Calu3 (cell line): ENCODE measurements at regions of chr3 and their contacts with region 1.

Region 1: DNA sequence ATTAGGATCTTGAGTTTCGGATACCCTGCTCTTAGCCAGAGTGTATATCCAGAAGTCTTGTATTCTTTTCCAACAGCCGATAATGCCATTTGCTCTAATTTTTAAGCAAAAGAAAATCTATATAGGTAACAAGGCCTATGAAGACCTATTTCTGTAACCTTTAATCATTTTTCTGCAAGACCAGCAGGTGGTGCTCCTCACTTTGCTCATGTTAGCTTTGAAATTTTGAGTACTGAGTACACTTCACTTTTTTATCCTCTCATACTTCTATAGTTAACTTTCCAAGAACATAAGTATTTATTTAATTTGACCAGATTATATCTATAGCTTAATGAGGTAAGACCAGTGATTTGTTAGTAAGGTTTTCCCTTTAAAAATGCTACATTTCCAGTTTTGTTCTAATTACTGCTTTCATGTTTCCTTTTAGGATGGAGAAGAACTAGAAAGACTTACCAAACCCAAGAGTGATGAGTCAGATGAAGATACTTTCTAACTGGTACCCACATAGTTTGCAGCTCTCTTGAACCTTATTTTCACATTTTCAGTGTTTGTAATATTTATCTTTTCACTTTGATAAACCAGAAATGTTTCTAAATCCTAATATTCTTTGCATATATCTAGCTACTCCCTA is 20.5 kb downstream of the SLC35A5 start:
- DNase-seq: peak; percentile 40
- H3K4me3 Mint-ChIP-seq: no peak overlapping the region
- H3K27ac Mint-ChIP-seq: no peak overlapping the region
- H3K4me1 Mint-ChIP-seq: no peaks in the 10 kb centered on the region
- H3K27me3 Mint-ChIP-seq: no peaks in the 10 kb centered on the region
- CTCF ChIP-seq: peak; percentile 20

Region 2: DNA sequence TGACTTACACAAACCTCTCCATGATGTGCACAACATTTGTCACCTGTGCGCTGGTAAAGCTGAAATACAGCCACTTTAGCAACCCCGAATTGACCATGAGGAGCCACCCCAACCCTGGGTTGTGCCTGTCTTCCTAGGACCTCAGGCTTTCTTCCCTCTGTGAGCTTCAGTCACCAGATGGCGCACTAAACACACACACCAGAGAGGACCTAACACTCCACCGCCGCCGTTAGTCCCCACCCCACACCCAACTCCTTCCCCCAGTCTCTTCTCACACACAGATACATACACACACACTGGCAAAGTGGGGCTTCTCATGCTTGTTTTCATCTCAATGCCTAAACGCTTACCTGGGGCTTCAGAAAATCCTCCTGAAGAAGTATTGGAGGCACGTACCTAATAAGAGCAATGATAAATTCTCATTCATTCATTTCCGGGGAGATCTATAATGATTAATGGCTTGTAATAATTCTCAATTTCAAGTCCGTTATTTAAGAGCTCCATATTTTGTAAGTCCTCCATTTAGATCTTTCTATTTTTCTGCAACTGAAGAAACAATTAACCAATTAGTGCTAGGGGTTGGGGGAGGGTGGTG is 60.6 kb after region 1 on chr3:
- CTCF ChIA-PET with region 1: interaction called, 3 read pairs
- intact Hi-C with region 1: loop called (anchors 2 kb)
- DNase-seq: peak; percentile 82
- H3K4me3 Mint-ChIP-seq: peak overlapping the region; percentile 31
- H3K27ac Mint-ChIP-seq: no peak overlapping the region
- H3K4me1 Mint-ChIP-seq: peaks cover 37% of the 10 kb centered on the region
- H3K27me3 Mint-ChIP-seq: no peaks in the 10 kb centered on the region
- CTCF ChIP-seq: no peak

Region 3: DNA sequence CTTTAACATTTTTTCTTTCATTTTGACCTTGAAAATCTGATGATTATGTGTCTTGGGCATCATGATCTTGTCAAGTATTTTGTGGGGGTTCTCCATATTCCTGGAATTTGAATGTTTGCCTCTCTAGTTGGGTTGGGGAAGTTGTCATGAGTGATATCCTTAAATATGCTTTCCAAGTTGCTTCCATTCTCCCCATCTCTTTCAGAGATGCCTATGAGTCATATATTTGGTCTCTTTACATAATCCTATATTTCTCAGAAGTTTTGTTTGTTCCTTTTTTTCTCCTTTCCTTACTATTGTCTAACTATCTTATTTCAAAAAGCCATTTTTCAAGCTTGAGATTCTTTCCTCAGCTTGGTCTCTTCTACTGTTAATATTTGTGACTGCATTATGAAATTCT is 127.6 kb after region 1 on chr3:
- CTCF ChIA-PET with region 1: no interaction called
- intact Hi-C with region 1: loop called (anchors 10 kb)
- DNase-seq: no peak
- H3K4me3 Mint-ChIP-seq: no peak overlapping the region
- H3K27ac Mint-ChIP-seq: no peak overlapping the region
- H3K4me1 Mint-ChIP-seq: no peaks in the 10 kb centered on the region
- H3K27me3 Mint-ChIP-seq: peaks cover 2% of the 10 kb centered on the region
- CTCF ChIP-seq: no peak

Region 4: GRCh38 chr3:112814266-112814665 is 231.9 kb after region 1 on chr3:
- CTCF ChIA-PET with region 1: no interaction called
- intact Hi-C with region 1: loop called (anchors 5 kb)
- DNase-seq: no peak
- H3K4me3 Mint-ChIP-seq: no peak overlapping the region
- H3K27ac Mint-ChIP-seq: no peak overlapping the region
- H3K4me1 Mint-ChIP-seq: peaks cover 11% of the 10 kb centered on the region
- H3K27me3 Mint-ChIP-seq: no peaks in the 10 kb centered on the region
- CTCF ChIP-seq: no peak

Region 5: DNA sequence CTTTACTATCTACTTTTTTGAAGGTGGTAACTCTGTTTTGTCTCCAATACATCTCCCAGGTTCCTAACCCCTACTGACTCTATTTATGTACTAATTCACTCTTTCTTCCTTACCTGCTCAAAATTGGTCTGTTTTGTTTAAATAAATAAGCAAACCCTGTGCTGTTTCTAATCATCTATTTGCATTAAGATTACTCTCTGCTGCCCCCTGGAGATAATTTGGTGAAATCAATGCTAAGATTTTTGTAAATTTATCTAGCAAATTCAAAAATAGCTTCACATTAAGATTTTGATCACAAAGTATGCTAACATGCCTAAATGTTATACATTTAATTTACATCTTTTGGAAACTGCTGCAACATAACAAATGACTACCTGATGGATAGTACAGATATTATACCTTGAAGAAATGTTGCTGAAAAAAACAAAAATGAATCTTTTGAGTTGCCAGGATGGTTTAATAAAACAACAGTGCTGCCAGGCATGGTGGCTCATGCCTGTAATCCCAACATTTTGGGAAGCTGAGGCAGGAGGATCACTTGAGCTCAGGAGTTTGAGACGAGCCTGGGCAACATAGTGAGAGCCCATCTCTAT is 397.0 kb after region 1 on chr3:
- CTCF ChIA-PET with region 1: no interaction called
- intact Hi-C with region 1: loop called (anchors 1 kb)
- DNase-seq: peak; percentile 4
- H3K4me3 Mint-ChIP-seq: no peak overlapping the region
- H3K27ac Mint-ChIP-seq: no peak overlapping the region
- H3K4me1 Mint-ChIP-seq: no peaks in the 10 kb centered on the region
- H3K27me3 Mint-ChIP-seq: no peaks in the 10 kb centered on the region
- CTCF ChIP-seq: peak; percentile 42